Vagina (tissue), 2 donors: ENCODE measurements at regions of chr22 and their contacts with region 1.

Region 1: DNA sequence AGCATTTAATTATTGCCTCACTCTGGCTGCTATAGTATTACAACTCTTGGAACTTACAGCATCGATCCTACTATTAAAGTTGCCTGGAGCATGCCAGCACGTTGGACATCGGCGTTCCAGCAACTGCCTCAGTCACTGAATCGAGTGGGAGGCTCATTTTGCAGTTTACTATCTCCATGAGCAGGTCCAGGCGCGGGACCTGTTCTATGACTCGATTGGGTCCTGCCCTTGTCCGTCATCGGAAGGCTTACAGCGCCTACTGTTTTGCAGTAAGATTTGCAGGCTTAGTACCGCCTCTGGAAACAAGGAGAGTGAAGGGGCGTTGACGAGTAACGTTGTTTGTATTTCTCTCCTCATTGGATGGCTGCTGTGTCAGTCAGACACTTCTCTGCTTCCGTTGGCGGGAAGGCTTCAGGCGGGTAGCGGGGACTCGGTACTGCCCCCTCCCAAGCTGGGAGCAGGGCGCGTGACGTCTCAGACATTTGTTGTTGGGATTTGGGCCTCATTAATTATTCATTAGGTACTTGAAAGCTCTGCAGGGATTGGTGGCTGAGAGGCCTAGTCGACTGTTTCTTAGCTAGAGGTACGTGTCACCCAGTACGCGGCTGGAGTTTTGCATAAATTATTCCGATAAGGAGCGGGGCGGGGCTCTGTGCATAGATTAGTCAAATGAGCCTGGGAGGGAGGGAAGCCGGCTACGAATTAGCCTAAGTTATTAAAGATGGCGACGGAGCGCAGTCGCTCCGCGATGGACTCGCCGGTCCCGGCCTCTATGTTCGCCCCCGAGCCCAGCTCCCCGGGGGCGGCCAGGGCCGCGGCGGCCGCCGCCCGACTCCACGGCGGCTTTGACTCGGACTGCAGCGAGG is at the start of gene GTPBP1:
- DNase-seq: peak; percentile 100
- H3K4me3 ChIP-seq: peak within 1 kb of the TSS; percentile 80 to 89
- H3K27ac ChIP-seq: peak within 1 kb of the TSS; percentile 98
- H3K4me1 ChIP-seq: peaks cover 48% of the 10 kb centered on the region
- H3K27me3 ChIP-seq: no peaks in the 10 kb centered on the region
- CTCF ChIP-seq: peak in 1 of 3 experiments; percentile 11
- POLR2A ChIP-seq: peak; percentile 95
- total RNA-seq, gene GTPBP1: 69.5 TPM

Region 2: GRCh38 chr22:38531251-38531938 is 174.1 kb before region 1 on chr22:
- intact Hi-C with region 1: no loop called
- DNase-seq: no peak
- H3K4me3 ChIP-seq: no peak overlapping the region
- H3K27ac ChIP-seq: no peak overlapping the region
- H3K4me1 ChIP-seq: no peaks in the 10 kb centered on the region
- H3K27me3 ChIP-seq: no peaks in the 10 kb centered on the region
- CTCF ChIP-seq: no peak
- POLR2A ChIP-seq: no peak

Region 3: GRCh38 chr22:38753948-38754750 is 48.7 kb after region 1 on chr22:
- intact Hi-C with region 1: loop called (anchors 5 kb)
- DNase-seq: peak in 1 of 2 donors; percentile 96
- H3K4me3 ChIP-seq: peak overlapping the region; percentile 69 to 94
- H3K27ac ChIP-seq: peak overlapping the region; percentile 97
- H3K4me1 ChIP-seq: peaks cover 53% of the 10 kb centered on the region
- H3K27me3 ChIP-seq: no peaks in the 10 kb centered on the region
- CTCF ChIP-seq: no peak
- POLR2A ChIP-seq: no peak